ENCODE measurements at regions of chr11 and their contacts with region 1.

Region 1: GRCh38 chr11:110349138-110349996 is 53.0 kb upstream of the RDX start:
- DNase-seq: peak; percentile 81
- ATAC-seq: peak; percentile 76
- H3K4me3 Mint-ChIP-seq: peak overlapping the region; percentile 40
- H3K27ac Mint-ChIP-seq: peak overlapping the region; percentile 99
- H3K4me1 Mint-ChIP-seq: peaks cover 57% of the 10 kb centered on the region
- H3K27me3 Mint-ChIP-seq: no peaks in the 10 kb centered on the region

Region 2: DNA sequence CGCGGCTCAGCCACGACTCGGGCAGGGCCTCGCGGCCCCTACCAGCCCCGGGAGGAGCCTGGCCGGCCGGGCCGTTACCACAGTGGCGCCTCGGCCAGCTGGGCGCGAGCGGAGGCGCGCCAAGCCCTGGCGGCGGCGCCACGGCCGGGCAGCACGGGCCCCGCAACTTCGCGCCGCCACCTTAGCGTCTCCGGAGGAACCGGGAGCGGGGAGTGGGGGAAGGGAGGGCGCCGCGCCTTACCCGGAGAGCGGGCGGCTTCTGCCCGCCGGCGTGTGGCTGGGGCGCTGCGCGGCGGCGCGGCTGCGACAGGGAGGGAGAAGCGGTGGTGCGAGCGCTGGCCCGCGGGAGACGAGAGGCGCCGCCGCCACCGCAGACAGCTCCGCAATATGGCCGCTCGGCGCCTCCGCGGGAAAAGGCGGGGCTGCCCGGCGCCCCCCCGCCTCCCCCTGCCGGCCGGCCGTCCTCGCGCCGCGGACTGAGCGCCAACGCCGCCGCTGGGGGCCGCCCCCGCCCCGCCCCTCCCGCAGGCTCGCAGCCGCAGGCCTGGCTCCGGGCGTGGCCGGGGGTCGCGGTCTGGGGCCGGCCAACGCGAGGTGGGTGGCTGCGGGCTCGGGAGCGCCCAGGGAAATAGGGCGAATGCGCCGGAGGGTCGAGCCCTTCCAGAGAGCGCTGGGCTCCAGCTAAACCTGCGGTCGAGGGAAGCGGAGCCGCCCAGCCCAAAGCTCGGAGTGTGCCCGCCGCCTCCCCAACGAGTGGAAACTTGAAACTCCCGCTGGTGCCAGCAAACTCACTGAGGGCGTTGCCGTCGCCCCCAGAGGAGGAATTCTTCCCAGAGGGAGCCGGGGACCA is 52.9 kb before region 1 on chr11 and contains the start of gene RDX:
- CTCF ChIA-PET with region 1: no interaction called
- DNase-seq: peak; percentile 71
- ATAC-seq: peak; percentile 76
- H3K4me3 Mint-ChIP-seq: peak within 1 kb of the TSS; percentile 92
- H3K27ac Mint-ChIP-seq: peak within 1 kb of the TSS; percentile 81
- H3K4me1 Mint-ChIP-seq: peaks cover 37% of the 10 kb centered on the region
- H3K27me3 Mint-ChIP-seq: no peaks in the 10 kb centered on the region
- total RNA-seq, gene RDX: 53.9 to 71.3 TPM

Region 3: GRCh38 chr11:110327508-110327907 is 21.9 kb before region 1 on chr11:
- CTCF ChIA-PET with region 1: interaction called, 12 read pairs
- DNase-seq: no peak
- ATAC-seq: no peak
- H3K4me3 Mint-ChIP-seq: peak overlapping the region; percentile 88
- H3K27ac Mint-ChIP-seq: peak overlapping the region; percentile 96
- H3K4me1 Mint-ChIP-seq: peaks cover 45% of the 10 kb centered on the region
- H3K27me3 Mint-ChIP-seq: no peaks in the 10 kb centered on the region

Region 4: DNA sequence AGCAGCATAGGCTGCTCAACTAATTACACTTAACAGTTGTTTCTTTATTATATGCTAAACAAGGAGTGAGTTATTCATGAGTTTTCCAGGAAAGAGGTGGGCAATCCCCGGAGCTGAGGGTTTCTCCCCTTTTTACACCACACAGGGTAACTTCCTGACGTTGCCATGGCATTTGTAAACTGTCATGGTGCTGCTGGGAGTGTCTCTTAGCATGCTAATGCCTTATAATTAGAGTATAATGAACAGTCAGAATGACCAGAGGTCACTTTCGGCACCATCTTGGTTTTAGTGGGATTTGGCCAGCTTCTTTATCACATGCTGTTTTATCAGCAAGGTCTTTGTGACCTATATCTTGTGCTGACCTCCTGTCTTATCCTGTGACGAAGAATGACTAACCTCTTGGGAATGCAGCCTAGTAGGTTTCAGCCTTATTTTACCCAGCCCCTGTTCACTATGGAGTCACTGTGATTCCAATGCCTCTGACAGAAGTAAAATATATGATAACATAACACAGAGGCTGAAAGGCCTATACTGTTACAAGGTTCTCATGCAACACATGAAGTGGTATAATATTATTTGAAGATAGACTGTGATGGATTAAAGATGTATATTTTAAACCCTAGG is 11.7 kb before region 1 on chr11:
- CTCF ChIA-PET with region 1: no interaction called
- DNase-seq: peak; percentile 71
- ATAC-seq: peak; percentile 64
- H3K4me3 Mint-ChIP-seq: no peak overlapping the region
- H3K27ac Mint-ChIP-seq: peak overlapping the region; percentile 32
- H3K4me1 Mint-ChIP-seq: peaks cover 31% of the 10 kb centered on the region
- H3K27me3 Mint-ChIP-seq: no peaks in the 10 kb centered on the region

Region 5: GRCh38 chr11:110598725-110599124 is 249.4 kb after region 1 on chr11:
- CTCF ChIA-PET with region 1: no interaction called
- DNase-seq: no peak
- ATAC-seq: no peak
- H3K4me3 Mint-ChIP-seq: no peak overlapping the region
- H3K27ac Mint-ChIP-seq: no peak overlapping the region
- H3K4me1 Mint-ChIP-seq: no peaks in the 10 kb centered on the region
- H3K27me3 Mint-ChIP-seq: peaks cover 4% of the 10 kb centered on the region

Measured in activated CD8-positive, alpha-beta memory T cell treated with anti-CD3 and anti-CD28 coated beads, Interleukin-2, amount 10 ng/mL, durations not matched to agents 7 days and 5 days (primary cell).